ENCODE measurements at regions of chr10 and their contacts with region 1.

Region 1: GRCh38 chr10:101141616-101142532 is 10.8 kb downstream of the TLX1 start:
- DNase-seq: peak; percentile 94
- H3K4me3 Mint-ChIP-seq: no peak overlapping the region
- H3K27ac Mint-ChIP-seq: no peak overlapping the region
- H3K4me1 Mint-ChIP-seq: peaks cover 17% of the 10 kb centered on the region
- H3K27me3 Mint-ChIP-seq: peaks cover 89% of the 10 kb centered on the region

Region 2: GRCh38 chr10:100653957-100654781 is 487.7 kb before region 1 on chr10:
- intact Hi-C with region 1: loop called (anchors 5 kb)
- DNase-seq: peak; percentile 72
- H3K4me3 Mint-ChIP-seq: peak overlapping the region; percentile 77
- H3K27ac Mint-ChIP-seq: peak overlapping the region; percentile 22
- H3K4me1 Mint-ChIP-seq: peaks cover 27% of the 10 kb centered on the region
- H3K27me3 Mint-ChIP-seq: peaks cover 66% of the 10 kb centered on the region

Region 3: GRCh38 chr10:101042667-101043355 is 99.1 kb before region 1 on chr10:
- intact Hi-C with region 1: loop called (anchors 5 kb)
- DNase-seq: peak; percentile 96
- H3K4me3 Mint-ChIP-seq: peak overlapping the region; percentile 97
- H3K27ac Mint-ChIP-seq: peak overlapping the region; percentile 89
- H3K4me1 Mint-ChIP-seq: peaks cover 19% of the 10 kb centered on the region
- H3K27me3 Mint-ChIP-seq: peaks cover 32% of the 10 kb centered on the region

Region 4: GRCh38 chr10:101060036-101060950 is 81.6 kb before region 1 on chr10:
- intact Hi-C with region 1: loop called (anchors 5 kb)
- DNase-seq: peak; percentile 97
- H3K4me3 Mint-ChIP-seq: peak overlapping the region; percentile 84
- H3K27ac Mint-ChIP-seq: peak overlapping the region; percentile 96
- H3K4me1 Mint-ChIP-seq: peaks cover 33% of the 10 kb centered on the region
- H3K27me3 Mint-ChIP-seq: peaks cover 26% of the 10 kb centered on the region

Region 5: DNA sequence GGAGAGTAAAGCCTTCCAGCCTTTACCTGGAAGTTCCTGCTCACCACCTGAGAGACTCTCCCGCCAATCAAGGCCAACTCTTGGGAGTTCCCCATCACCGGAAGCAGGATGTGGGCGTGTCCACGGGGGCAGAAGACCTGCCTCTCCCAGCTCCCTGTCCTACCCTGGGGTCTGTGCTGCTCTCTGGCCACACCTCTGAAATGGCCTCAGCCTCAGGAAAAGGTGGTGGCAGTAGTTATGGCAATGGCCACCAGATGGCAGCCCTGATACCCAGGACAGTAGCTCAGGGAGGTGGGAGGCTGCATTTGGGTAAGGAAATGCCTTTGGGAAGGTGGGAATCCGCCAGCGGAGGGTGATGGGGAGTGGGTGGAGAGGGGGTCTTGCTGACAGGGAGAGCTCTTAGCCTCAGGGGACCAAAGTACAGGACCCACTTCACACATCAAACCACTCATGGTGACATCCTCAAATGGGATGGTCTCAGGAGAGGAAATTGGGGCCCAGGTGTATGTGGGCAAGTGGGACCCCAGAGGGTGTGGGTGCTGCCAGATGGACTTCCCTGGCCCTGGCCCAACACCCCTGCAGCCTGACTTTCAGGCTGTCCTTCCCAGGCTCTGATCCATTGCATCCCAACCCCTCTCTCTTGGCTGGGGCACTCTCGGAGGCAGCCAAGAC is 46.2 kb before region 1 on chr10:
- intact Hi-C with region 1: loop called (anchors 1 kb)
- DNase-seq: peak; percentile 92
- H3K4me3 Mint-ChIP-seq: no peak overlapping the region
- H3K27ac Mint-ChIP-seq: no peak overlapping the region
- H3K4me1 Mint-ChIP-seq: peaks cover 4% of the 10 kb centered on the region
- H3K27me3 Mint-ChIP-seq: peaks cover 22% of the 10 kb centered on the region

Region 6: DNA sequence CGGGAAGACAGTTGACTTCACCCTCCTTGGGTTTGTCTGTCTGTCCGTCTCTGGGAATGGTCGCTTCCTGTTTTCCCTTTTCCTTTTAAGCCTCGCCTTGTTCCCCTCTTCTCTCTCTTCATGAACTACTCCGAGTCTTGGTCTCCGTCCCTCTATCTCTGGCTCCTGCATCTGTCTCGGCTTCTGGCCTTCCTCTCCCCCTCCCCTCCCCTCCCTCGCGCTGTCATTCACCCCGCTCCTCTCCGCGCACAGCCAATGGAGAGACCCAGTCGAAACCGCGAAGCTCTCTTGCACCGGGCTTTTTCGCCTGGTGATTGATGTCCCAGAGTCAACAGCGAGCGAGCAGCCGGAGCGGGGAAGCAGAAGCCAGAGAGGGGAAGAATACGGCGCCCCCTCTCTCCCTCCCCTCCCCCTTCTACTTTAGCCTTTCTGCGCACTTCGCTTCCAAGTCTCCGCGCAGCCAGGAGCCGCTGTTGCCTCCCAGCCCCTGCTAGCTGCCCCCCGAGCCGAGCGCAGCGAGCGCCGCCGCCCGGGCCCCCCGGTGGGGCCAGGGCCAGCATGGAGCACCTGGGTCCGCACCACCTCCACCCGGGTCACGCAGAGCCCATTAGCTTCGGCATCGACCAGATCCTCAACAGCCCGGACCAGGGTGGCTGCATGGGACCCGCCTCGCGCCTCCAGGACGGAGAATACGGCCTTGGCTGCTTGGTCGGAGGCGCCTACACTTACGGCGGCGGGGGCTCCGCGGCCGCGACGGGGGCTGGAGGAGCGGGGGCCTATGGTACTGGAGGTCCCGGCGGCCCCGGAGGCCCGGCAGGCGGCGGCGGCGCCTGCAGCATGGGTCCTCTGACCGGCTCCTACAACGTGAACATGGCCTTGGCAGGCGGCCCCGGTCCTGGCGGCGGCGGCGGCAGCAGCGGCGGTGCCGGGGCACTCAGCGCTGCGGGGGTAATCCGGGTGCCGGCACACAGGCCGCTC is 10.6 kb before region 1 on chr10 and contains the start of gene TLX1:
- intact Hi-C with region 1: loop called (anchors 1 kb)
- DNase-seq: peak; percentile 59
- H3K4me3 Mint-ChIP-seq: no peak within 1 kb of the TSS
- H3K27ac Mint-ChIP-seq: no peak within 1 kb of the TSS
- H3K4me1 Mint-ChIP-seq: peaks cover 13% of the 10 kb centered on the region
- H3K27me3 Mint-ChIP-seq: peaks cover 85% of the 10 kb centered on the region
- total RNA-seq, gene TLX1: not detected in 2 replicates

Region 7: GRCh38 chr10:101291331-101292193 is 149.7 kb after region 1 on chr10:
- intact Hi-C with region 1: loop called (anchors 5 kb)
- DNase-seq: peak; percentile 67
- H3K4me3 Mint-ChIP-seq: peak overlapping the region; percentile 79
- H3K27ac Mint-ChIP-seq: no peak overlapping the region
- H3K4me1 Mint-ChIP-seq: peaks cover 3% of the 10 kb centered on the region
- H3K27me3 Mint-ChIP-seq: peaks cover 70% of the 10 kb centered on the region

Measured in activated CD4-positive, alpha-beta T cell treated with anti-CD3 and anti-CD28 coated beads, Interleukin-2, amount 10 ng/mL, durations not matched to agents 24 days and 14 days (primary cell).